ENCODE measurements at regions of chr11 and their contacts with region 1.

Region 1: GRCh38 chr11:997907-998306 is 38.6 kb downstream of the MUC6 start:
- DNase-seq: no peak

Region 2: GRCh38 chr11:492427-493226 is 505.3 kb before region 1 on chr11:
- intact Hi-C with region 1: no loop called
- DNase-seq: no peak

Region 3: DNA sequence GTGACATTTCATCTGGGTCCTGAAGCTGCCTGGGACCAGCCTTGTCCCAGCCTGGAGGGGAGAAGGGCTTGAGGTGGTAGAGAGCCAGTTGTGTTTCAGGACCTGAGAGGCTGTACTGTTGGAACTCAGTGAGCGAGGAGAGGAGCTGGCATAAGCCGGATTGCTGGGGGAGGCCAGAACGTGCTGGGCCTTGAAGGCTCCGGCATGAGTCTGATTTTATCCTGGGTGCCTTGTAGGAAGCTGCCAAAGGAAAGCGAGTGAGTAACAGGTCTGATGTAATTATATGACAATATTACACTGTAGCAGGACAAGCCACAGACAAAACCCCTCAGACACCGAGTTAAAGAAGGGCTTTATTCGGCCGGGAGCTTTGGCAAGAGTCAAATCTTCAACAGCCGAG is 55.1 kb before region 1 on chr11:
- intact Hi-C with region 1: no loop called
- DNase-seq: no peak

Region 4: DNA sequence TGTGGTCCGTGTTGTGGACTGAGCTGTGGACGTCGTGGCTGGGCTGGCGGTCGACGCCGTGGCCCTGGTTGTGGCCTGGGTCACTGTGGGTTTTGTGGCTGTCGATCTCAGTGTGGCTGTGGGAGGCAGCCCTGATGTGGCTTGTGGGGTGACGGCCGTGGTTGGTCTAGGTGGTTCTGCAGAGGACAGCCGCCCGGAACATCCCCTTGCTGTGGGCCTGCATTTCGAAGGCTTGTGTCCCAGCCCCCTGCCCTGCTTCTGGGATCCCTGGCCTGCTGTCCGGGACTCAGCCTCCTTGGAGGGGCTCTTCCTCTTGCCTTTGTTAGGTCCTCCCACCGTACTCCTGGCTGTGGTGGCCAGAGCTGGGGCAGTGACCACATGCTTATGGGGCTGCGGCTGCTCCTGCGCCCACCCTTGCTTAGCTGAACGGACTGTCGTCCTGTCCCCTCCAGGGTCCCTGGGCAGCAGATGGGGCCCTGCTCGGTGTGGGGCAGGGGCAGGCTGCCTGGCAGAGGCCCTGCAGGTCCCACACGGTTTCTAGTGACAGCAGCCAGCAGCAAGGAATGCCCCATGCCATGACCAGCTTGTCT is 21.5 kb after region 1 on chr11:
- intact Hi-C with region 1: loop called in 1 of 2 experiments (anchors 1 kb)
- DNase-seq: no peak

Measured in posterior vena cava (tissue), 2 donors.